Colonic mucosa (tissue), 4 donors: ENCODE measurements at regions of chr3 and their contacts with region 1.

Region 1: DNA sequence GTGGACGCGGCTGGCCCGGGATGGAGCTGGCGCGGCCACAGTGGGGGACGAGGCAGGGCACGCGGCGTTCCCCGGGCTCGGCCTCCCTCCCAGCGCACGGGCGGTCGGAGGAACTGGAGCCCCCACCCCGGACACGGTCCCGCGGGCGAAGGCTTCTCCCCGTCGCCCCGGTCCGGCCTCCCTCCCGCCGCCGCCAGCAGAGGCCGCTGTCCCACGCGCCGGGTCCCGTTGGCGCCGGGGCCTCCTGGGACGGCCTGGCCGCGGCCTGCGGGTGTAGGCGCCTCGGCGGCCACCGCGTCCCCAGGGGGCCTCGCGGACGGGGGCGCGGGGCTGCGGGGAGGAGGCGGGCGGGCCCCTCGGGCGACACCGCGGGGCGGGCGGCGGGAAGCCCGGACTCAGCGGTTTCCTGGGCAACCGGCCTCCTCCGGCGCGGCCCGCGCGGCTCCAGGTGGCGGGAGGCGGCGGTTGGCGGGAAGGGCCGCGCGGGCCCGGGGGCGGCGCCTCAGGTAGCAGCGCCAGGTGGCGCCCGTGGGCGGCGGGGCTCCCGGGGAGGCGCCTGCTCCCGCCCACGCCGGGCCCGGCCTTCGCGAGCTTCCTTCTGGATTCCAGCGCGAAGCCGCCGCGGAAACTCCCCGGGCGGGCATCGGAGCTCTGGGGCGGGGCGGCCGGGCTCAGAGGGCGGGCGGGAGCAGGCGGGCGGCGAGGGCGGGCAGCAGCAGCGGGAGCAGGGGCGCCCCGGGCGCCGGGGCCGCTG is 26.7 kb downstream of the MELTF start:
- DNase-seq: peak; percentile 90
- H3K4me3 ChIP-seq: peak overlapping the region; percentile 60
- H3K27ac ChIP-seq: peak overlapping the region; percentile 65
- H3K4me1 ChIP-seq: no peaks in the 10 kb centered on the region
- H3K27me3 ChIP-seq: no peaks in the 10 kb centered on the region
- CTCF ChIP-seq: peak; percentile 51

Region 2: DNA sequence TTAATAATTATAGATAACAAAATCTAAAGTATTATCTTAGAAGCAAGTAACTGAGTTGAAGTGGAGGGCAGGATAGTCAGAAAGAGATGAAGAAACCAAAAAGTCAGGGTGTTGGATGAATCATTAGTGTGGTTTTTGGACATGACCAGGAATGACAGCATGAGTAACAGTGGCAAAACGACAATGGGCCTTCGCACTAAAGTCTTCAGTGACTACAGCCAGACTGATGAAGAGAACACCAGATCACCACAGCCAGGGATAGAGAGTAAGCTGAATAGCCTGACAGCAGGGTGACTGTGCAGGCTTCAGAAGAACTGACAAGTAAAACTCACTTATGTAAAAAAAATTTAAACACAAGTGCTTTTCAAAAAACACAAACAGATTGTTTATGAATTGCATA is 122.8 kb after region 1 on chr3:
- intact Hi-C with region 1: no loop called
- DNase-seq: no peak
- H3K4me3 ChIP-seq: no peak overlapping the region
- H3K27ac ChIP-seq: no peak overlapping the region
- H3K4me1 ChIP-seq: no peaks in the 10 kb centered on the region
- H3K27me3 ChIP-seq: no peaks in the 10 kb centered on the region
- CTCF ChIP-seq: no peak

Region 3: DNA sequence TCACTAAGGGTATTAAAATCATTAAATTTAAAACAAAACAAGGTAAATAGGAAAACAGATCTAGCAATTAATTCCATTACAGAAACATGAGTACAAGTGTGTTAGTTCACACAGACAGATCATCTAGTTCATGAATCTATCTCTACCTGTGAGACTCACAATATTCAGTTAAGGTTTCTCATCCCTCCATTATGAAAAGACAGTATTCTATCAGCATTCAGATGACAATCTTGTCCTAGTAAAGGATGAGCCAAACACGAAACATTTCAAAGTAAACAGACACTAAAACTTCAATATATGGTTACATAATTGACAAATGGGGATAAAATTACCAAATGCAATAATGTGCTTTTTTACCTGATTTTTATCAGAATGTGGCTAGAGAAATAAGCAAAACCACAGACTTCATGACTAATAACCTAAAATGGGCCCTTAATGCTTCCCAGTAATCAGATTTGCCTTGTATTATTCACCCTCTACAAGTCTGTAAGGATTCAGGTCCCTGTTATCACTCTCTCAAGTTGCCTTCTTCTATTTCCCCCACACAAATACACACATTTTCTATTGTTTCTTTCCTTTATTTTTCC is 168.7 kb after region 1 on chr3:
- intact Hi-C with region 1: no loop called
- DNase-seq: no peak
- H3K4me3 ChIP-seq: no peak overlapping the region
- H3K27ac ChIP-seq: no peak overlapping the region
- H3K4me1 ChIP-seq: no peaks in the 10 kb centered on the region
- H3K27me3 ChIP-seq: no peaks in the 10 kb centered on the region
- CTCF ChIP-seq: no peak

Region 4: GRCh38 chr3:197186887-197187588 is 184.2 kb after region 1 on chr3:
- intact Hi-C with region 1: loop called (anchors 2 kb)
- DNase-seq: no peak
- H3K4me3 ChIP-seq: no peak overlapping the region
- H3K27ac ChIP-seq: no peak overlapping the region
- H3K4me1 ChIP-seq: no peaks in the 10 kb centered on the region
- H3K27me3 ChIP-seq: no peaks in the 10 kb centered on the region
- CTCF ChIP-seq: peak; percentile 70

Region 5: DNA sequence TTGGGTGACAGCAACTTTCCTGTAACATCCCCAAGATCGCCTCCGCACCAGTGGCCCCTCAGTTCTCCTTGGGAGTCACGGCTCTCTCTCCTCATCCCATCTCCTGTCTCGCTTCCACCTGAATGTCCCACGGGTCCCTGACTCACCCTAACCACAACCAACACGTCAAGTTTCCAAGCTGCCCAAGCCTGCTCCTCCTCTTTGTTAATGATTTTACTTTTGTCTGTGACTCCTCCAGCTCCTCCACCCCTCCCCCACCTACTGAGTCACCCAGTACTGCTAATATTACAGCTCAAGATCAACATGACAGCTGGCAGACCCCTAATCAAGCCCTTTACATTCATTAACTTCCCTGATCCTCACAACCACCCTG is 513.6 kb after region 1 on chr3:
- intact Hi-C with region 1: loop called (anchors 10 kb)
- DNase-seq: no peak
- H3K4me3 ChIP-seq: no peak overlapping the region
- H3K27ac ChIP-seq: no peak overlapping the region
- H3K4me1 ChIP-seq: peaks cover 3% of the 10 kb centered on the region
- H3K27me3 ChIP-seq: no peaks in the 10 kb centered on the region
- CTCF ChIP-seq: no peak